Activated naive CD8-positive, alpha-beta T cell treated with anti-CD3 and anti-CD28 coated beads, Interleukin-2, amount 10 ng/mL, durations not matched to agents 7 days and 5 days (primary cell): ENCODE measurements at regions of chr10 and their contacts with region 1.

Region 1: GRCh38 chr10:102678842-102679289 is 34.6 kb downstream of the TRIM8 start:
- DNase-seq: no peak
- ATAC-seq: no peak
- H3K4me3 Mint-ChIP-seq: no peak overlapping the region
- H3K27ac Mint-ChIP-seq: no peak overlapping the region
- H3K4me1 Mint-ChIP-seq: peaks cover 42% of the 10 kb centered on the region
- H3K27me3 Mint-ChIP-seq: no peaks in the 10 kb centered on the region

Region 2: DNA sequence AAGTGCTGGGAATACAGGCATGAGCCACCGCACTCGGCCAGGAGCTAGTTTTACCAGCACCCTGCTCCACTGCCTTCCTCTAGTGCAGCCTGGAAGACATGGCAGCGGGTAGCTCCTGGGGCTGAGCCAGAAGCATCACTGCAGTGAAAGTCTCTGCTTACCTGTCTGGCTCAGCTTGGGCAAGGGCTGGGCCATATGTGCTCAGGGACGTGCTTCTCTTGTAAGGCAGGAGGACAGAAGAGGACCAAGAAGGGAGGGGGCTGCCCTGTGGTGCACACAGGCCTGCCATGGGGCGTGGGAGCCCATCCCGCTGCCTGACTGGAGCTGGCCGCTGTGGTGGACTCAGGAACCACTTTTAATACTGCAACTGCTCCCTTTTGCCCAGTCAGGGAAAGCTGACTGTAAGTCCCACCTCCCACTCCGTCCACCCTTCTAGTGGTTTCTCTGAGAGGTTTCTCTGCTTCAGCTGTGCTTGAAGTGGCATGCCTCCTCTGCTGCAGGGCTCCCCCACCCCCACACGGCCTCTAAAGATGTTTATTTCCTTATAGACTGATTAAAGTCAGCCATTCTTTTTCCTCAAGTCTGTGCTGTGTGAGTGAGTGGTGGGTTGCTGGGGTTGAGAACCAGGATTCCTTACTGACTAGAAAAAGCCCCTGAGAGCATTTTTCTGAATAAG is 202.3 kb before region 1 on chr10:
- POLR2A ChIA-PET with region 1: no interaction called
- DNase-seq: no peak
- ATAC-seq: no peak
- H3K4me3 Mint-ChIP-seq: no peak overlapping the region
- H3K27ac Mint-ChIP-seq: peak overlapping the region; percentile 82
- H3K4me1 Mint-ChIP-seq: peaks cover 24% of the 10 kb centered on the region
- H3K27me3 Mint-ChIP-seq: no peaks in the 10 kb centered on the region

Region 3: DNA sequence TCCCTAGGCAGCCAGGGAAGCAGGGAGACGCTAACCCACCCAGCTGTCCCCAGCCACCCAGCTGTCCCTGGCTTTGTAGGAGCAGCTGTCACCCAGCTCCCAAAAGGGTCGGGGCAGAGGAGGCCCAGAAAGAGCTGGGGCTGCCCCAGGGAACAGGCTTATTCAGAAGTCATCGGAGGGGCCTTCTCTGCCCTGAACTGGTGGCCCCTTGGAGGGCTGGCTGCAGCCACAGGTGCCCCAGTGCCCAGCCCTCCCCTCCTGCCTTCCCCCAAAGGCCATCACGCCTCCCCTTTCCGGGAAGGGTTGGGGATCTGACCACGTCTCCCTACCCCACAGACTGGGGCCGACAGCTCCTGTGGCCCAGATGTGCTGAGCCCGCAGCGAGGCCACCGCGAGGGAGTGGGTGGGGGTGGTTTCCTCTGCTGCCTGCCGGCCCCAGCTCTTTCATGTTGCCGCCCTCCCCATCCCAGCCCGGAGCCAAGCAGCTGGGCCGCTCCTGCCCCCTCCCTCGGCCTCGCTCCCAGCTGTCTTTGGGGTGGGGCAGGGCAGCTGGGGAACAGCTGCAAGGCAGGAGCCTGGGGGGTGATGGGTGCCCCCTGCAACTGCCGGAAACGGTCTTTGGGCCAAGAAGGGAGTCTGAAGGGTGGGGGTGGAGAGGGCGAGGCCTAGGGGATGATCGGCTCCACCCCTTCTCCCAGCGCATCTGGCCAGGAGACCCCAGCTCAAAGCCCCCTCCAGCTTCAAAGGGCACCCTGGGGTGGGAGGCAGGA is 17.8 kb before region 1 on chr10:
- POLR2A ChIA-PET with region 1: interaction called, 94 read pairs
- DNase-seq: peak; percentile 83
- ATAC-seq: peak; percentile 84
- H3K4me3 Mint-ChIP-seq: peak overlapping the region; percentile 69
- H3K27ac Mint-ChIP-seq: peak overlapping the region; percentile 91
- H3K4me1 Mint-ChIP-seq: peaks cover 36% of the 10 kb centered on the region
- H3K27me3 Mint-ChIP-seq: no peaks in the 10 kb centered on the region